ENCODE measurements at regions of chr1 and their contacts with region 1.

Region 1: GRCh38 chr1:150072959-150073358 is 5.4 kb downstream of the VPS45 start:
- ATAC-seq: peak in 3 of 8 experiments; percentile 46 to 56 (median 52)
- H3K4me3 ChIP-seq: no peak overlapping the region
- H3K27ac ChIP-seq: no peak overlapping the region
- H3K4me1 ChIP-seq: peaks cover 6 to 9% of the 10 kb centered on the region in 2 donors

Region 2: DNA sequence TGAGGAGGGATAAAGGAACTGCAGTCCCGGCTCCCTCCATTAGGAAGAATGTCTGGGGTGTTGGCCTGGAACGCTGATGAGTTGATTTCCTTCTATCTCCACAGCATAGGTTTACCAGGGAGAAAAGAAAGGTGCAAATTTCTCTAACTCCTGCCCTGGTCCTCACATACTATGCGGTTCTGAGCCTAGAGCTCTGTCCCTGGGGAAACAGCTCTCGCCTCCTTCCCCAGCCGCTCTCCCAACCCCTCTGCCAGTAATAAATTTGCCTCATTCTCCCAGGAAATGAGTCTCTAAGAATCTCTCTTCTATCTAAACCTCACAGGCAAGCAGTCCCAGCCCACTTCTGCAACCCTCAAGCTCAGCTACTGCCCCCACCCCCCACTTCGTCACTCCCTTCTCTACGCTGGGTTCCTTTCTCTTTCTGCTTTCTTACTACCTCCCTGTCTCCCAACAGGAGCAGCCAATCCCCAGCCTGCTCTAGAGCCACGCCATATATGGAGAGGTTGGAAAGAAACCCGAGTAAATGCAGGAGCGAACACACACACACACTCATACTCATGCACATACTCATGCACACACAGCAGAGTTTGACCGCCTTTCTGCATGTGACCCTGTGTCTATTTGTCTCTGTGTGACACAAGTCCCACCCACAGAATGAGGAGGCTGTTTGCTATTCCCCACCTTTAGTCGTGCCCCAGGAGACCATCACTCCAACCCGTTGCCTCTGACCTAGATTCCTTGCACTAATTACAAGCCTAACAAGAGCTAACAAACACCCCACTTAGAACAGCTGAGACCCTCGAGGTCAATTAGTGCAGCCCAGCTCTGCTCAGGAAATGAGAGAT is 90.1 kb after region 1 on chr1:
- in situ Hi-C with region 1: loop called in 1 of 9 experiments (anchors 10 kb)
- ATAC-seq: peak; percentile 90 to 97 (median 96)
- H3K4me3 ChIP-seq: peak overlapping the region; percentile 0 to 26 (median 17)
- H3K27ac ChIP-seq: peak overlapping the region; percentile 93 to 96
- H3K4me1 ChIP-seq: peaks cover 28 to 32% of the 10 kb centered on the region in 2 donors